AG04449 (cell line): ENCODE measurements at regions of chr4 and their contacts with region 1.

Region 1: GRCh38 chr4:173478201-173478912 is 51.7 kb downstream of the HAND2 start:
- DNase-seq: peak; percentile 55
- H3K4me3 ChIP-seq: no peak overlapping the region
- CTCF ChIP-seq: no peak

Region 2: DNA sequence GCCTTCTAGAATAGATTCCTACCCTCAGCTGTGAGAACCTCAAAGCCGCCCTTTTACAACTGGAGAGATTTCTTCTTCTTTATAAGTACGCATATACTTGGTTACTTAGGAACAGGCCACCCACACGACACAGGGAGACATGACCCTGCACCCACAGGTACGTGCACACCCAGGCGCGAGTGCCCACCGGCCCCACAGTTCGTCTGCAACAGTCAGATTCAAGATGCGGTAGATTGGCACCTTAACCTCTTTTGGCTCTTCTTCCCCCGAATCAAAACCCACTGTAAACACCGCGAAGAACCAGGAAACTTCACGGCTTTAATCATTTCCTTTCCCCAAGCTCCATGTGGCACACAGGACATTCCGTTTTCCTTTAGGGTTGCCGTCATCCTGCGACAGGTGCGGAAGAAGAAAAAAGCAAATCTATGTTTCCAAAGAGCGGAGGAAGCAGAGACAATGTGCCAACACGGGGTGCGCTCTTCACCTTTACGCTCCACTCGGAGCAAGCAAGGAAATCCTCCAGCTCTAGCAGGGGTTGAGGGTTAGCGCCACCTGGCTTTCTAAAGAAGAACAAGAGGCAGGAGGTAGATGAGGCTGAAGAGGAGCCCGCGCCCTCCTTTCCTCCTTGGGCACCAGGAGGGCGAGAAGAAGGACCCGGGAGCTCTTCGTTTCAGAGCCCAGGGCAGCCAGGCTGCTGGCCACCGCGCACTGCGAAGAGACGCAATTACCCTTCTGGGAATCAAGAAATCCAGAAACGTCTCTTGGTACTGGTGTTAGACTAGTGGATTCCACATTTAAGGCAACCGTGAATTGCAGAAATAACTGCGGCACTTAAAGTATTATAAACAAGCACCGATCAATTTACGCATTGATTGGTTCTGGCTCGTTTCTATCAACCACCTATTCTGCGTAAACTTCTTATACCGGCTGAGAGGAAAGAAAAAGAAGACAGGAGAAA is 15.9 kb after region 1 on chr4:
- CTCF ChIA-PET with region 1: interaction called, 12 read pairs
- POLR2A ChIA-PET with region 1: no interaction called
- DNase-seq: no peak
- H3K4me3 ChIP-seq: peak overlapping the region; percentile 31
- CTCF ChIP-seq: peak; percentile 85

Region 3: DNA sequence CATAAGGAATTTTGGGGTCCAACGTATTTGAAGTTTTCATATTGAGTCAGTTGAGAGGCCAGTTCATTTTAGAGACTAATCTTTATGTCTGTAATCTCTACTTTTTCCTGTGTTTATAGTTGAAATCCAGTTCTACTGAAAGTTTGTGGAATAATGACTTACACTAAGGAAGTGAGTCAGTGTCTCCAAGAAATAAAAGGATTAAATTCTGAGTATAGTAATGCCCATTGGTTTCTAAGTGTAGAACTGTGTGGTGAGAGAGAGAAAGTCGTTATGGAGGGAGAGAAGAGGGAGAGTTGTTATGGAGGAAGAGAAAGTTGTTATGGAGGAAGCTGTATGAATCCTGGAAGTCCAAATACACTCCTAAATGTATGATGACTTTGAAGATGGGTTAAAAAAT is 316.3 kb after region 1 on chr4:
- CTCF ChIA-PET with region 1: no interaction called
- POLR2A ChIA-PET with region 1: no interaction called
- DNase-seq: no peak
- H3K4me3 ChIP-seq: no peak overlapping the region
- CTCF ChIP-seq: no peak